ENCODE measurements at regions of chr9 and their contacts with region 1.

Region 1: DNA sequence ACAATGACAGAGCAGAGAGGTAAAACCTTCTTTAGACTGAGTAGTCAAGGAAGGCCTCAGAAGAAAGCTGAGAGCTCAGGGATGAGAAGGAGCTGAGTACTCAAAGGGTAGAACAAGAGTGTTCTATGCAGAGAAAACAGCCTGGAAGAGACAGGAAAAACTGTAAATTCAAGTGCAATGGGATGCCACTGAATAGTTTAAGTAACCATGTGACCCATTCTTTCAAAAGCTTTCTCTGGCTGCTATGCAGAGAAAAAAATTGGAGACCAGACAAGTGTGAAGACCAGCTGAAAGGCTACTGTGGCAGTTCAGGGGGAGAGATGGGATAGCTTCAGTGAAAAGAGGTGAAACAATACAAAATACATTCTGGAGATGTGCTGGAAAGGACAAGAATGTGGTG is 61.3 kb upstream of the RNF38 start:
- DNase-seq: no peak
- H3K4me3 Mint-ChIP-seq: no peak overlapping the region
- H3K27ac Mint-ChIP-seq: no peak overlapping the region
- H3K4me1 Mint-ChIP-seq: peaks cover 48% of the 10 kb centered on the region
- H3K27me3 Mint-ChIP-seq: no peaks in the 10 kb centered on the region

Region 2: GRCh38 chr9:36450110-36450732 is 11.1 kb before region 1 on chr9:
- CTCF ChIA-PET with region 1: interaction called, 10 read pairs
- POLR2A ChIA-PET with region 1: no interaction called
- intact Hi-C with region 1: no loop called
- DNase-seq: peak; percentile 29
- H3K4me3 Mint-ChIP-seq: no peak overlapping the region
- H3K27ac Mint-ChIP-seq: no peak overlapping the region
- H3K4me1 Mint-ChIP-seq: peaks cover 8% of the 10 kb centered on the region
- H3K27me3 Mint-ChIP-seq: no peaks in the 10 kb centered on the region

Region 3: GRCh38 chr9:36479101-36479500 is 17.8 kb after region 1 on chr9:
- CTCF ChIA-PET with region 1: no interaction called
- POLR2A ChIA-PET with region 1: no interaction called
- intact Hi-C with region 1: no loop called
- DNase-seq: no peak
- H3K4me3 Mint-ChIP-seq: no peak overlapping the region
- H3K27ac Mint-ChIP-seq: no peak overlapping the region
- H3K4me1 Mint-ChIP-seq: peaks cover 19% of the 10 kb centered on the region
- H3K27me3 Mint-ChIP-seq: no peaks in the 10 kb centered on the region

Region 4: GRCh38 chr9:36492865-36493264 is 31.5 kb after region 1 on chr9:
- CTCF ChIA-PET with region 1: no interaction called
- POLR2A ChIA-PET with region 1: interaction called, 8 read pairs
- intact Hi-C with region 1: loop called (anchors 1 kb)
- DNase-seq: peak; percentile 32
- H3K4me3 Mint-ChIP-seq: peak overlapping the region; percentile 49
- H3K27ac Mint-ChIP-seq: peak overlapping the region; percentile 73
- H3K4me1 Mint-ChIP-seq: peaks cover 56% of the 10 kb centered on the region
- H3K27me3 Mint-ChIP-seq: no peaks in the 10 kb centered on the region

Region 5: DNA sequence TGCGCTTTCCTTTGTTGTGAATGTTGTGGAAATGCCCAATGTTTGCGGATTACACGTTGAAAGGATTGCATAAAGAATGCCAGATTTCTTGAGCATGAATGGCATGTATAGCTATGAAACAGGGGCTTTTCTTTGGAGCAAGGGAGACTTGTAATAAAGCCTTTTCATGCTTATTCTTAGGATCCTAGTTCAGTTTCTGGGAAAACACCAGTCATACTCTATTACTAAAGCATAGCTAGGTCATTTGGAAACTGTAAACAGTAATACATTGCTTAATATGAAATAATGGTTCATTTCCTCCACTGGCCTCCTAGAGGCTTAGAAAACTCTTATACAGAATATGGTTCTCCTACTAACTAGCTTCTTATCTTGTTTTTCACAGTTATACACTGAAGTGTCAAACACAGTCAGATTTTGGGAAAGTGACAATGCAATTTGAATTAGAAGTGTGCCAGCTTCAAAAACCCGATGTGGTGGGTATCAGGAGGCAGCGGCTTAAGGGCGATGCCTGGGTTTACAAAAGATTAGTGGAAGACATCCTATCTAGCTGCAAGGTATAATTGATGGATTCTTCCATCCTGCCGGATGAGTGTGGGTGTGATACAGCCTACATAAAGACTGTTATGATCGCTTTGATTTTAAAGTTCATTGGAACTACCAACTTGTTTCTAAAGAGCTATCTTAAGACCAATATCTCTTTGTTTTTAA is 215.6 kb after region 1 on chr9:
- CTCF ChIA-PET with region 1: no interaction called
- POLR2A ChIA-PET with region 1: no interaction called
- intact Hi-C with region 1: no loop called
- DNase-seq: no peak
- H3K4me3 Mint-ChIP-seq: no peak overlapping the region
- H3K27ac Mint-ChIP-seq: peak overlapping the region; percentile 34
- H3K4me1 Mint-ChIP-seq: peaks cover 21% of the 10 kb centered on the region
- H3K27me3 Mint-ChIP-seq: no peaks in the 10 kb centered on the region